Ovary (tissue), 10 donors: ENCODE measurements at regions of chr19 and their contacts with region 1.

Region 1: DNA sequence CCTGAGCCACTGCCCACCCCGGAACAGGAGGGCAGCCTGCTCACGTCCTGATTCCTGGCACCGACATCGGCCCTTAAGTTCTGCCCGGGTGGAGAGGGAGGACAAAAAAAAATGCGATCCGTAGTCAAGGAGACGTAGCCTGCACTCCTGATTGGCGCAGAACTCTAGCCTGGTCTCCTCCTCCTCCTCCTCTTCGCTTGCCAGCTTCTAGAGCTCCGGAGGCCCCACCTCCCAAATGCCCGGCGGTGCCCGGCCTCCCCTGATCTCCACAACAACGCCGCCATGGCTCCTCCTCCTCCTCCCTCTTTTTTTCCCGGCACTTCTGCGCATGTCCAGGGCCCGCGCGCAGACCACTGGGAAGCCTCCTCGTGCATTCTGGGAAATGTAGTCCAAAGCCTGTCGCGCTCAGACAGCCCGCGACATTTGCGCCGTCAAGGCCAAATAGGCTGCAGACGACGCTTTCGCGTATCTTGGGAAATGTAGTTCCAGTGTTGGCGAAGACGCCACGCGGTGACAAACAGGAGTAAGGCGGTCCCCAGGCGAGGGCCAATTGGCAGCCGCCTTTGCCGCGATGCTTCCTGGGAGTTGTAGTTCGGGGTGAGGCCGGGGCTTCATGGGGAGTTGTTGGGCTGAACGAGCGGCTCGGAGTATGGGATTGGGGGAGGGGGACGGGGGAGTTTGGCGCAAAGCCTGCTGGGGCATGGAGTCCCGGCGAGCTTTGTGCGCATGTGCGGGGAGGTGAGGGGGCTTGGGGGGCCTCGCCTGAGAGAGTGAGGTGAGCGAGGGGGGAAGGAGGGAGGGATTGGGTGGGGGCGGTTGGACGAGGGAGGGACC is at the start of gene ZNF444:
- DNase-seq: peak; percentile 99
- H3K4me3 ChIP-seq: peak within 1 kb of the TSS; percentile 65
- H3K27ac ChIP-seq: peak within 1 kb of the TSS; percentile 57 to 90
- H3K4me1 ChIP-seq: peaks cover 4% of the 10 kb centered on the region
- H3K27me3 ChIP-seq: no peaks in the 10 kb centered on the region
- CTCF ChIP-seq: no peak
- EP300 ChIP-seq: peak; percentile 51
- POLR2A ChIP-seq: peak; percentile 50
- total RNA-seq, gene ZNF444: 27.4 to 48.2 (median 38.2) TPM

Region 2: DNA sequence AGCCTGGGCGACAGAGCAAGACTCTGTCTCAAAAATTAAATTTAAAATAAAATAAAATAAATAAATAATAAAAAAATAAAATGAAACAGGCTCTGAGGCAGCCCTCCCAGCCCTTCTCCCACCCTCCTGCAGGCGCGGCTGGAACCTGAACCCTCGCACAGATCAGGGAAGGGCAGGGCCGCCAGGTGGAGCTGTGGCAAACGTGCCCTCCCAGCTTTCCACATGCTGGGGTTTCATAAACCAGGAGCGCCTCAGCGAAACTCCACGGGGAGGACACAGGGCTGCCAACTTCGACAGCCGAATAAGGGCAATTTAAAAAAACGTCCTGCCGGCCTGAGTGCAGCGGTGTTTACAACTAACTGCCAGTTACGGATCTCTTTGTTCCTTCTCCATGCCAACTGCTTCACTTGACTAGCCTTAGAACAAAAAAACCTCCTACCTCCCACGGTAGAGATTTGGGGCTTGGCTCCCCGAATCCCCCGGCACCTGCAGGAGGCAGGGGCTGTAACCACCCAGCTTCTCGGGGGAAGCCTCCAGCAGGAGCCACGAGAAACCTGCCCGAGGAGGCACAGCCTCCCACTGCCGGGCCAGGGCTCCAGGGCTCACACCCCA is 35.6 kb before region 1 on chr19:
- intact Hi-C with region 1: loop called in 1 of 4 experiments (anchors 5 kb)
- DNase-seq: peak; percentile 67 to 82 (median 73)
- H3K4me3 ChIP-seq: no peak overlapping the region
- H3K27ac ChIP-seq: peak overlapping the region in 1 of 2 donors; percentile 23
- H3K4me1 ChIP-seq: peaks cover 23% of the 10 kb centered on the region
- H3K27me3 ChIP-seq: no peaks in the 10 kb centered on the region
- CTCF ChIP-seq: peak; percentile 18 to 47 (median 36)
- EP300 ChIP-seq: no peak
- POLR2A ChIP-seq: no peak

Region 3: DNA sequence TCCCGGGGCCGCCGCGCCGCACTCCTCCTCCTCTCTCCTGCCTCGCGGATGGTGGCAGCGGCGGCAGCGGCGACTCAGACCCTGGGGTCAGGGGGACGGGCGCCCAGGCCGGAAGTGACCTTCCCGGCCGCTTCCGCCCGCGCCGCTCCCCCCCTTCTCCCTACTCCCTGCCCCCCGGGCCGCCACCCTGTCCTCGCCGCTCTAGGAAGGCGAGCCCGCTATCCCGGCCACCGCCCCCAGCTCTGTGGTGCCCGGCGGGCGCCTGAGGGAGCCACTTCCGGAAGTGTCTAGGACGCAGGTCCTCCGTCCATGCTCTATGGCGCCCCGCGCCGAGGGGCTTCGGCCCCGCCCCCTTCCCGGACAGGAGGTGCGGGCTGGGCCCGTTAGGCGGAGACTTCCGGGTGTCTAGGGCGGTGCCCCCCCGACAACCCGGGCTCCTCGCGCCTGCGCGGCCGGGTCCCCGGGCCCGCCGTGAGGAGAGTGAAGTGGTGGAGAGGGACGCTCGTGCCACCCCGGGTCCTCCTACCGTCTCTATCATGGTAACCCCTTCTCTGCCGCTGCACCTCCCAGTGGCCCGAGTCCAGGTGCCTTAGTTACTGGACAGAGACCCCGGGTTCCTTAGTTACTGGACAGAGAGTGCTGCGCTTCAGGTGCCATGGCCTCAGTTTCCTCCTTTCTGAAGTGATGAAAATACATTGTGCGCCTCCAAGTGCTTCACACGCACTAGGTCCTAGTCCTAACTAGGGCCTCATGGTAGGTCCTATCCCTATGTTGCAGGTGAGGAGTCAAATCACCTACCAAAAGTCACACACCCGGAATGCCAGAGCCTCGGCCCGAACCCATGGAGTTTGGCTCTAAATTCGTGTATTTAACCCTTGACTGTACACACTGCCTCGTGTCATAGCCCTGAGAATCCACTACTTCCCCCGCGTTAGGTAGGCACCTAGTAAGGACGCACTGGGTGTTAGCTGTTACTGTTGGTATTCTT is 19.3 kb before region 1 on chr19 and contains the start of gene ZNF787:
- intact Hi-C with region 1: loop called in 1 of 4 experiments (anchors 2 kb)
- DNase-seq: peak; percentile 99 to 100 (median 99)
- H3K4me3 ChIP-seq: peak within 1 kb of the TSS; percentile 89
- H3K27ac ChIP-seq: peak within 1 kb of the TSS; percentile 64 to 91
- H3K4me1 ChIP-seq: peaks cover 12% of the 10 kb centered on the region
- H3K27me3 ChIP-seq: no peaks in the 10 kb centered on the region
- CTCF ChIP-seq: peak in 1 of 3 donors; percentile 4
- EP300 ChIP-seq: peak; percentile 57
- POLR2A ChIP-seq: peak; percentile 47
- total RNA-seq, gene ZNF787: 10.4 to 36.8 (median 27.5) TPM

Region 4: DNA sequence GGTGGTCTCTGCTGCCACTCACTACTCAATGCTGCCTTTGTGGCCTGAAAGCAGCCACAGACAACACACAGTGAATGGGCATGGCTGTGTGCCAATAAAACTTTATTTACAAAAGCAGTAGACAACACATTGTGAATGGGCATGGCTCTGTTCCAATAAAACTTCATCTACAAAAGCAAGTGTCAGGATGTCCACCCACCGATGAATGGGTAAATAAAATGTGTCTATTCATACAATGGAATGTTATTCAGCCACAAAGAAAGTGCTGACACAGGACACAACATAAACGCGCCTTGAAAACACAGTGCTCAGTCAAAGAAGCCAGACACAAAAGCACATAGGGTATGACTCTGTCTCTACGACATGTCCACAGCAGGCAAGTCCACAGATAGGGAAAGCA is 153.7 kb after region 1 on chr19:
- intact Hi-C with region 1: no loop called
- DNase-seq: no peak
- H3K4me3 ChIP-seq: no peak overlapping the region
- H3K27ac ChIP-seq: no peak overlapping the region
- H3K4me1 ChIP-seq: no peaks in the 10 kb centered on the region
- H3K27me3 ChIP-seq: no peaks in the 10 kb centered on the region
- CTCF ChIP-seq: no peak
- EP300 ChIP-seq: no peak
- POLR2A ChIP-seq: no peak

Region 5: DNA sequence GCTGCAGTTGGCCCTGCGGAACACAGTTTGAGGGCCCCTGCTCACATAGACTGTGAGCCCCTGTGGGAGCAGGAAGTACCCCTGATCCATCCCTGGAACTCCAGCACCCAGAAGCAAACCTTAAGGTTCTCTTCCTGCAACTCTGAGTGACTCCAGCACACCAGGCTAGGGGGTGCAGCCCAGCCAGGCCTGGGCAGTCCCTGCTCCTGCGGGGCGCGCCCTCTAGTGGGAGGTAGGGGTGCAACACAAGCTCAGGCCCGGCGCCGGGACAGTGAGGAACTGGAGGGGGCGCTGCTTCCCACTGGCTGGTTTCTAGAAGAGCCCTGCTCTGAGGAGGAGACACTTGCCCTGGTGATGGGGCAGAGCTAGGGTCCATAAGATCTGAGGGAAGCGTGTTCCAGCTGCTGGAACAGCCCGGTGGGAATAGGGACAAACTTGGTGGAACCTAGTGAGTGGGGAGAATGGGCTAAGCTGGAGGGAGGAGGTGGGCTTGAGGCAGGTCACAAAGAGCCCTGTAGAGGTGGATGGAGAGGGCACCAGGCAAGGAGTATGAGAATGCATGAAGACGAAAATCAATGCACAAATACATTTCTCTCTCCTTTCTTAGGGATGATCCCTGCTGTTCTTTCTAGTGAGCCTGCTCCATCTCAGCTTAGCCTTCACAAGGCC is 168.9 kb after region 1 on chr19:
- intact Hi-C with region 1: loop called in 1 of 4 experiments (anchors 10 kb)
- DNase-seq: peak in 1 of 5 donors; percentile 51
- H3K4me3 ChIP-seq: no peak overlapping the region
- H3K27ac ChIP-seq: no peak overlapping the region
- H3K4me1 ChIP-seq: peaks cover 3% of the 10 kb centered on the region
- H3K27me3 ChIP-seq: no peaks in the 10 kb centered on the region
- CTCF ChIP-seq: no peak
- EP300 ChIP-seq: no peak
- POLR2A ChIP-seq: no peak